ENCODE measurements at regions of chr3 and their contacts with region 1.

Region 1: GRCh38 chr3:139358841-139359562 is 15.2 kb downstream of the MRPS22 start:
- DNase-seq: no peak
- H3K4me3 Mint-ChIP-seq: no peak overlapping the region
- H3K27ac Mint-ChIP-seq: no peak overlapping the region
- H3K4me1 Mint-ChIP-seq: peaks cover 25% of the 10 kb centered on the region
- H3K27me3 Mint-ChIP-seq: no peaks in the 10 kb centered on the region

Region 2: DNA sequence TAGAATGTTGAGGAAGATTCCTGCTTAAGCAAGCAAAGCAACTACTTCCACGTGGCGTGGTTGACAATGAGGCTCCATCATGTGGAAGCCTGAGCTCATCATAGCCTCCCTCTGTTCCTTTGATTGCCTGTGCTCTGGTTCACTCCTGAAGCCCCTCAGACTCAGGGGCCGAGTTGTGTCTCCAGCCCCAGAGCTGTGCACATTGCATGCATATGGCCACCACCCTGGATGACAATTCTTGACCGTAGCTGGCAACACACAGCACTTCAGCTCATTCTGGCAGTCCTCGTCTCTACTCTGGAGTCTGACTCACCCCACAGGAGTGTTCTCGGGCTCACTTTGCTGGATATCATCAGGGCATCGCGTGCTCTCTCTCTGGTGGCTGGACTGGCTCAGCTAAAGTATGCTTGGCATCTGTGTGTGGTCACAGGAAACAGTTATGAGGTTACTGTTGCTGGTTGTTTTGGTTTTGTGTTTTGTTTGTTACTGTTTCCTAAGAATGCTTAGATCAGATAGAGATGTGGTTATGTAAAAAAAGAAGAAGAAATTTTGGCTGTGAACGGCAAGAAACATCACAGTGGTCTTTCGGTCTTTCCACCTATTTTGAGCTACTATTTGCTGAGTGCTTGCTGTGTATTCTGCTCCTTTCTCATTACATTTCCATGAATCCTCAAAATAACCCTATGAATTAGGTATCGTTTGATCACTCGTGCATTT is 56.8 kb before region 1 on chr3:
- intact Hi-C with region 1: loop called (anchors 2 kb)
- DNase-seq: peak; percentile 51
- H3K4me3 Mint-ChIP-seq: peak overlapping the region; percentile 3
- H3K27ac Mint-ChIP-seq: peak overlapping the region; percentile 45
- H3K4me1 Mint-ChIP-seq: peaks cover 42% of the 10 kb centered on the region
- H3K27me3 Mint-ChIP-seq: no peaks in the 10 kb centered on the region

Region 3: GRCh38 chr3:139343895-139344856 is 14.8 kb before region 1 on chr3 and contains the start of gene MRPS22:
- intact Hi-C with region 1: loop called (anchors 1 kb)
- DNase-seq: peak; percentile 78
- H3K4me3 Mint-ChIP-seq: no peak within 1 kb of the TSS
- H3K27ac Mint-ChIP-seq: peak within 1 kb of the TSS; percentile 6
- H3K4me1 Mint-ChIP-seq: peaks cover 15% of the 10 kb centered on the region
- H3K27me3 Mint-ChIP-seq: no peaks in the 10 kb centered on the region
- total RNA-seq, gene MRPS22: 51.2 and 51.9 TPM in 2 replicates

Region 4: GRCh38 chr3:139653582-139653981 is 294.6 kb after region 1 on chr3:
- intact Hi-C with region 1: no loop called
- DNase-seq: no peak
- H3K4me3 Mint-ChIP-seq: no peak overlapping the region
- H3K27ac Mint-ChIP-seq: no peak overlapping the region
- H3K4me1 Mint-ChIP-seq: no peaks in the 10 kb centered on the region
- H3K27me3 Mint-ChIP-seq: no peaks in the 10 kb centered on the region

Measured in activated T-helper 2 cell treated with anti-CD3 and anti-CD28 coated beads, Interferon-gamma antibody, Interleukin-2, Interleukin-4, amounts not matched to agents 10 μg/mL and 5 μg/mL and 100 μg/mL, durations not matched to agents 14 hours and 24 hours and 36 hours (primary cell).